ENCODE measurements at regions of chr20 and their contacts with region 1.

Region 1: GRCh38 chr20:39773519-39773951 is 811.4 kb downstream of the DHX35 start:
- DNase-seq: no peak
- ATAC-seq: no peak
- H3K4me3 ChIP-seq: no peak overlapping the region
- H3K27ac ChIP-seq: no peak overlapping the region
- H3K4me1 ChIP-seq: no peaks in the 10 kb centered on the region
- H3K27me3 ChIP-seq: no peaks in the 10 kb centered on the region
- CTCF ChIP-seq: no peak
- EP300 ChIP-seq: no peak
- POLR2A ChIP-seq: no peak
- RAD21 ChIP-seq: no peak

Region 2: GRCh38 chr20:39164642-39165041 is 608.9 kb before region 1 on chr20:
- CTCF ChIA-PET with region 1: no interaction called
- POLR2A ChIA-PET with region 1: no interaction called
- in situ Hi-C with region 1: no loop called
- intact Hi-C with region 1: loop called (anchors 5 kb)
- DNase-seq: no peak
- ATAC-seq: no peak
- H3K4me3 ChIP-seq: no peak overlapping the region
- H3K27ac ChIP-seq: no peak overlapping the region
- H3K4me1 ChIP-seq: no peaks in the 10 kb centered on the region
- H3K27me3 ChIP-seq: no peaks in the 10 kb centered on the region
- CTCF ChIP-seq: no peak
- EP300 ChIP-seq: no peak
- POLR2A ChIP-seq: no peak
- RAD21 ChIP-seq: no peak

Region 3: GRCh38 chr20:39751557-39752137 is 21.9 kb before region 1 on chr20:
- CTCF ChIA-PET with region 1: no interaction called
- POLR2A ChIA-PET with region 1: no interaction called
- in situ Hi-C with region 1: no loop called
- intact Hi-C with region 1: no loop called
- DNase-seq: no peak
- ATAC-seq: no peak
- H3K4me3 ChIP-seq: no peak overlapping the region
- H3K27ac ChIP-seq: no peak overlapping the region
- H3K4me1 ChIP-seq: no peaks in the 10 kb centered on the region
- H3K27me3 ChIP-seq: no peaks in the 10 kb centered on the region
- CTCF ChIP-seq: no peak
- EP300 ChIP-seq: no peak
- POLR2A ChIP-seq: no peak
- RAD21 ChIP-seq: no peak